AG04450 (cell line): ENCODE measurements at regions of chr19 and their contacts with region 1.

Region 1: GRCh38 chr19:13398780-13399726 is 107.2 kb downstream of the CACNA1A start:
- DNase-seq: peak; percentile 75
- H3K4me3 ChIP-seq: no peak overlapping the region; the same call in 1 of the 2 replicates
- H3K27ac ChIP-seq: peak overlapping the region; percentile 95
- H3K27me3 ChIP-seq: no peaks in the 10 kb centered on the region
- CTCF ChIP-seq: no peak

Region 2: GRCh38 chr19:13373602-13374001 is 25.5 kb before region 1 on chr19:
- CTCF ChIA-PET with region 1: no interaction called
- POLR2A ChIA-PET with region 1: no interaction called
- DNase-seq: no peak
- H3K4me3 ChIP-seq: no peak overlapping the region
- H3K27ac ChIP-seq: no peak overlapping the region
- H3K27me3 ChIP-seq: no peaks in the 10 kb centered on the region
- CTCF ChIP-seq: no peak

Region 3: DNA sequence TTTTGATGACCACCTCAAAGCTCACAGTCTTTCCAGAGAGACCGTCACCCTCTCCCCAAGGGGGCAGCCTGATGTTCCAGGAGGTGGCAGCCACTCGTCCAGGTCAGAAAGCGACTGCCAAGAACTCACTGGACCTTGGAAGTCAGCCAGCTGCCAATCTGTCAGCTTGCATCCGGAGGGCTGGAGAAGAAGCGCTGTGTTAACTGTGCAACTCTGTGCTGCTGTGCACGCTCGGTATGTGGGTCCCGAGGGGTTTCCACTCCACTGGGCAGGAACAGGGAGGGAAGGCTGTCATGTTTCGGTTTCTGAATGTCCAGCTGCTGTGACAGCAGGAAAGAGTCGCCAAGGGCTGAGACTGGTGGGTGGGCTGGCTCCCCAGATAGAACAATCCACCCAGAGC is 18.0 kb after region 1 on chr19:
- CTCF ChIA-PET with region 1: no interaction called
- POLR2A ChIA-PET with region 1: no interaction called
- DNase-seq: no peak
- H3K4me3 ChIP-seq: no peak overlapping the region
- H3K27ac ChIP-seq: no peak overlapping the region
- H3K27me3 ChIP-seq: no peaks in the 10 kb centered on the region
- CTCF ChIP-seq: no peak

Region 4: GRCh38 chr19:13588957-13589833 is 190.1 kb after region 1 on chr19:
- CTCF ChIA-PET with region 1: interaction called, 10 read pairs
- POLR2A ChIA-PET with region 1: no interaction called
- DNase-seq: peak; percentile 24
- H3K4me3 ChIP-seq: no peak overlapping the region
- H3K27ac ChIP-seq: no peak overlapping the region
- H3K27me3 ChIP-seq: no peaks in the 10 kb centered on the region
- CTCF ChIP-seq: peak; percentile 96